Ascending aorta (tissue), 2 donors: ENCODE measurements at regions of chr15 and their contacts with region 1.

Region 1: DNA sequence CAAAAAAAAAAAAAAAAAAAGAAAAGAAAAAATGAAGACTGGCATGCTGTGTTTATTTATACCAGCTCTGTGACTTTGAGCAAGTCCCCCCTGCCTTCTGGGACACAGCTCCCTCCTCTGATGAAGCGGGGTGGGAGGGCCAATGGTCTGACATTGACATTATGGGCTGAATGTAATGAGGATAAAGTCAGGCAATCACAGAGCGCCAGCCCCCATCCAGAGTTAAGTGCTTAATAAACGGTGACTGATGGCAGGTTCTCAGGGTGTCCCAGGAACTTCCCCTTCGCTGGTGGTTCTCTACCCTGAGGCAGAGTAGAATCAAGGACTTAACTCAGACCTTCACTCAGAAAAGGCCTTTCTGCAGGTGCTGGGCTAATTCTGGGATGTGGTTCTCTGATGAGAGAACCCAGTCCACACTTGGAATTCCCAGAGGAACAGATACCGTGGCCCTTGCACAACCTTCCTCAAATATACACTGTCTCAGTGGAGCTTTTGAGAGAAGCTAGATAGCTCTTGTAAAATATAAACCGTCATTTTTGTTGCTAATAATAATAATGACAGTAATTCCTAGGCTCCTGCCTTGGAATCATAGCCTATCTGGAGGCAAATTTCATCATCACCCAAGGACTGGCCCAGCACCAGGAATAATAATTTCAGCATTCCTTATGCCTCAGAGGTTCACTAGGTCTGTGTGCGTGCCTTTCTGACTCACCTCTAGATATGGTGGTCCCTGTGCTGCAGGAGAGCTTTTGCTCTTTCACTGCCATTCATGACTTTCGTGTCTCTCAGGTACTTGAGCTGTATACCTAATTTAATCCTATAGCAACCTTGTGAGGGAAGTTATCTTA is 115.8 kb downstream of the RPLP1 start:
- DNase-seq: peak in 1 of 2 donors; percentile 84
- H3K4me3 ChIP-seq: no peak overlapping the region
- H3K27ac ChIP-seq: peak overlapping the region; percentile 63 to 68
- H3K4me1 ChIP-seq: peaks cover 3 to 9% of the 10 kb centered on the region in 2 donors
- H3K27me3 ChIP-seq: no peaks in the 10 kb centered on the region
- CTCF ChIP-seq: no peak

Region 2: DNA sequence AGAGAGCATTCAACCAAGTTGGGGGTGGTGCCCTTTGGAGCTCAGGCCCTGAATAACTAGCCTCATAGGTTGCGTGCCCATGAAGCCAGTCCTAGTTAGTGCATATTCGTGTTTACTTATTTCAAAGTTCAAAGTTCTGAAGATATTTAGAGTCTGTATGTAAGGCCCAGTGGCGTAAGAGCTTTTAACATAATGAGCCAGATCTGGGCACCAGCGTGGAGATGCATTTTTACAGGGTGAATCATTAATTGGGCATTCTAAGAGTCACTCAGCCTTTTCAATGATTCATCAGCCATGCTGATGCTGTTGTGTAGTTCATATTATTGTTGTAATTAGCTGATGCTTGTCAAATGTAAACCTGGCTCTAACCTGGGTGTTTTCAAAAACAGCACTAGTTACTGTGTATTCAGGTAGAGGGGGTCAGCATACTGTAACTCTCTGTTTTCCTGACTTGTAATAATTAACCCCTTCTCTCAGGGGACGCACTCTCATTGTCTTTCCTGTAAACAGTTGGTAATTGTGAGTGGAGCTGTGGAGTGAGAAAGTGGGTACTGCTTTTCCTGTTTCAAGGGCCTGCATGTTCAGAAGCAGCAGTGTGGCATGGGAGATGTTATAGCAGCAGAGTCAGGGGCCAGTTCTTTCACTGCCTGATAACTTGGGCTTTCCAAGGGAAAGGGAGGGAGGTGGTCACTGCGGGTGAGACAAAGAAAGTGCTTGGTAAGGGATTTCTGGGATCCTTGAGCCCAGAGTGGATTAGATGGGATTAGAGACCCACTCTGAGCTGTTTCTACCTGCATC is 10.9 kb before region 1 on chr15:
- intact Hi-C with region 1: loop called (anchors 1 kb)
- DNase-seq: peak in 1 of 2 donors; percentile 83
- H3K4me3 ChIP-seq: no peak overlapping the region
- H3K27ac ChIP-seq: peak overlapping the region; percentile 46 to 64
- H3K4me1 ChIP-seq: peaks cover 4 to 13% of the 10 kb centered on the region in 2 donors
- H3K27me3 ChIP-seq: no peaks in the 10 kb centered on the region
- CTCF ChIP-seq: no peak

Region 3: GRCh38 chr15:69583626-69584025 is 15.2 kb after region 1 on chr15:
- intact Hi-C with region 1: no loop called
- DNase-seq: no peak
- H3K4me3 ChIP-seq: no peak overlapping the region
- H3K27ac ChIP-seq: no peak overlapping the region
- H3K4me1 ChIP-seq: peaks cover 5 to 8% of the 10 kb centered on the region in 2 donors
- H3K27me3 ChIP-seq: no peaks in the 10 kb centered on the region
- CTCF ChIP-seq: no peak